ENCODE measurements at regions of chr1 and their contacts with region 1.

Region 1: GRCh38 chr1:55021965-55022546 is 17.3 kb upstream of the PCSK9 start:
- DNase-seq: peak; percentile 40
- H3K4me3 ChIP-seq: no peak overlapping the region
- CTCF ChIP-seq: peak; percentile 95

Region 2: GRCh38 chr1:54965624-54966340 is 56.3 kb before region 1 on chr1:
- CTCF ChIA-PET with region 1: interaction called, 13 read pairs
- POLR2A ChIA-PET with region 1: no interaction called
- DNase-seq: no peak
- H3K4me3 ChIP-seq: no peak overlapping the region
- CTCF ChIP-seq: no peak

Region 3: DNA sequence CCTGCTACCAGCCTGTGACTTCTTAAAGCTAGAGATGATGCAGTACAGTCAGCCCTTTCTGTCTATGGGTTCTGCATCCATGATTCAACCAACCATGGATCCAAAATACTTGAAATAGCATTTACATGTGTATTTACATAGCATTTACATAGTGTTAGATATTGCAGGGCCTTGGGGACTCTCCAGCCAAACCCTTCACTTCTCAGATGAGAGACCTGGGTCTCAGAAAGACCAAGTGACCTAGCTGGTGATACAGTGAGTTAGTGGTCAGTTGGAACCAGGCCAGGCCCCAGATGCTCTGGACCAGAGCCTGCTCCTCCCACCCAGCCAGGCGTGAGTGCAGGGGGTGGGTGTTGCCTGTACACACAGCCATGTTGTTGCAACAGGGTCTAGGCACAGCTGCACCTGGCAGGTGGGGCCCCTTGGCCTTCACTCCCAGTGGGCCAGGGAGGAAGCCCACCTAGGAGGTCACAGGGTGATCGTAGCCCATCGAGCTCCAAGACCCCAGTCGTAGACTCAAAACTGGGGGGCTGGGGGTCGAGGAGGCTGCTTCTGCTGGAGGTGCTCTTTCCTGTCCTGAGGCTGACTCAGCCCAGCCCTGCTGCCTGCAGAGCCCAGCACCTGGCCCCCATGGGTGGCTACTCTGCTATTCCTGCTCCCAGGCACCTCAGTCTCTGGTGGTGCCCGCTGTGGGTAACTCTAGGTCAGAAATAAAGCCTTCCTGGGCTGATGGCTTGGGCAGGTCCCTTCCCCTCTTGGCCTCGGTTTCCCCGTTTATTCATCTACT is 33.9 kb before region 1 on chr1:
- CTCF ChIA-PET with region 1: interaction called, 14 read pairs
- POLR2A ChIA-PET with region 1: no interaction called
- DNase-seq: peak; percentile 66
- H3K4me3 ChIP-seq: no peak overlapping the region
- CTCF ChIP-seq: no peak

Region 4: GRCh38 chr1:55007625-55008024 is 14.4 kb before region 1 on chr1:
- CTCF ChIA-PET with region 1: interaction called, 59 read pairs
- POLR2A ChIA-PET with region 1: no interaction called
- DNase-seq: peak; percentile 56
- H3K4me3 ChIP-seq: no peak overlapping the region
- CTCF ChIP-seq: no peak